ENCODE measurements at regions of chr20 and their contacts with region 1.

Region 1: DNA sequence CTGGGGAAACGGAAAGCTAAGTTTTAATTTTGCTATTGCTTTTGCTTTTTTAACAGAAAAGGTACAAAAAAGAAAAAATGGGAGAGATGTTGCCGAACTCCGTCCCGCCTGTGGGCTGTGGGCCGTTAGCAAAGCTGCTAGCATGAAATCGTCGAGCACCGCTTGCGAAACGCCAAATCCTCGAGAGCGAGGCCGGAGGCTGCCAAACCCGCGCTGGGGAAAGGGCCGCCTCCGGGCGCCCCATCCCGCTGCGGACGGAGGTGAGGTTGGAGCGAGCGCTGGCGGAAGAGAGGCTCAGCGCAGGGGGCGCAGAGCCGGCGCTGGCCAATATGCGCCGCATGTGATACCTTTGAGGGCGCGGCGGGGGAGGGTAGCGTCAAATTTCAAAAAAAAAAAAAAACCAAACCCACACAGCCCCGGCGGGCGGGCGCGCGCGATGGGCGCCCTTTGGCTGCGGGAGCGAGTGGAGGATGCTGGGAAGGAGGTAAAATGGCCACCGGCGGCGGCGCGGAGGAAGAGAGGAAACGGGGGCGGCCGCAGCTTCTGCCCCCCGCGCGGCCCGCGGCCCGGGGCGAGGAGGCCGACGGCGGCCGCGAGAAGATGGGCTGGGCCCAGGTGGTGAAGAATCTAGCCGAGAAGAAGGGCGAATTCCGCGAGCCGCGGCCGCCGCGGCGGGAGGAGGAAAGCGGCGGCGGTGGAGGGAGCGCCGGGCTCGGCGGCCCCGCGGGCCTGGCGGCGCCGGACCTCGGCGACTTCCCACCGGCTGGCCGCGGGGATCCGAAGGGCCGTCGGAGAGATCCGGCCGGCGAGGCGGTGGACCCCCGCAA is at the start of gene ZCCHC3:
- DNase-seq: peak; percentile 89
- ATAC-seq: peak; percentile 83
- H3K4me3 Mint-ChIP-seq: peak within 1 kb of the TSS; percentile 93
- H3K27ac Mint-ChIP-seq: peak within 1 kb of the TSS; percentile 97
- H3K4me1 Mint-ChIP-seq: peaks cover 47% of the 10 kb centered on the region
- H3K27me3 Mint-ChIP-seq: no peaks in the 10 kb centered on the region
- total RNA-seq, gene ZCCHC3: 27.4 to 28.2 TPM

Region 2: GRCh38 chr20:284172-284790 is 13.0 kb before region 1 on chr20:
- CTCF ChIA-PET with region 1: no interaction called
- DNase-seq: no peak
- ATAC-seq: no peak
- H3K4me3 Mint-ChIP-seq: no peak overlapping the region
- H3K27ac Mint-ChIP-seq: no peak overlapping the region
- H3K4me1 Mint-ChIP-seq: peaks cover 10% of the 10 kb centered on the region
- H3K27me3 Mint-ChIP-seq: no peaks in the 10 kb centered on the region

Region 3: GRCh38 chr20:324177-325044 is 27.1 kb after region 1 on chr20:
- CTCF ChIA-PET with region 1: interaction called, 30 read pairs
- DNase-seq: peak; percentile 92
- ATAC-seq: peak; percentile 71
- H3K4me3 Mint-ChIP-seq: peak overlapping the region; percentile 87
- H3K27ac Mint-ChIP-seq: peak overlapping the region; percentile 86
- H3K4me1 Mint-ChIP-seq: peaks cover 16% of the 10 kb centered on the region
- H3K27me3 Mint-ChIP-seq: no peaks in the 10 kb centered on the region